GM12878 (cell line): ENCODE measurements at regions of chr7 and their contacts with region 1.

Region 1: DNA sequence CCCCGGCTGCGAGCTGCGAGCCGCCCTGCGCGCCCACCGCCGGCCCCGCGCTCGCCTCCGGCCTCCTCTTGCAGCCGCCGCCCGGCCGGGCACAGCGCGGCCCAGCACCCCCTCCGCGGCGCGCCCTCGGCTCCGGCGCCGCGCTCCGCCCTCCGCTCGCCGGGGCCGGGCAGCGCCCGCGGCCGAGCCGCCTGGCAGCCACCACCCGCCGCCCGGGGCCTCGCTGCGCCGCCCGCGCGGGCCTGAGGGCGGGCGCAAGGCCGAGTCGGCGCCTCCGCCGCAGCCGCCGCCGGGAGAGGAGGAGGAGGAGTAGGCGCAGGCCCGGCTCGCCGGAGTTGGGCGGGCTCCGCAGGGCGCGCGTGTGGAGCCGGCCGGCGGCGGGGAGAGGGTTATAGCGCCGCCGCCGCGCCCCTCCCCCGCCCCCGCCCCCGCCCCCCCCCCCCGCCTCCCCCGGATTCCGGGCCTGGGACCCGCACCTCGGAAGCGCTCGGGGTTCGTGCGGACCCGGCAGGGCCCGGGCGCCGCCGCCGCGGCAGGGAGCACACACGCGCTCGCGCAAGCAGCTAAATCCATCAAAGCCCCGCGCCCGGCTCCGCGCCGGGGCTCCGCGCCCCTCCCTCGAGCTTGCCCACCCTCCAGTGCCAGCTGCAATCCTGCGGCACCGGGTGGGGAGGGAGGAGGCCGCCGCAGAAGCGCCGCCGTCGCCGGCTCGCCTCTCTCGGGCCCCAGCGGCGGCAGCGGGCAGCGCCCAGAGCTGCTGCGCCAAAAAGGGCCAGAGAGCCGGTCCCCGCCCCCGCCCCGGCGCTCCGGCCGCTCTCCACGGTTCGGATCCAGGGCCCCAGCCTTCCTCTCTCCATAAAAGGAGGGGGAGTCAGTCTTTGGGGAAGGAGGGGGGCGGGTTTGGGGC is at the start of gene PDGFA:
- DNase-seq: no peak
- ATAC-seq: peak; percentile 57
- H3K4me3 ChIP-seq: peak within 1 kb of the TSS; percentile 64
- H3K27ac ChIP-seq: no peak within 1 kb of the TSS
- H3K4me1 ChIP-seq: peaks cover 16% of the 10 kb centered on the region
- H3K27me3 ChIP-seq: peaks cover 2 to 3% of the 10 kb centered on the region in 2 experiments
- CTCF ChIP-seq: no peak
- EP300 ChIP-seq: no peak
- POLR2A ChIP-seq: no peak
- RAD21 ChIP-seq: no peak
- polyA plus RNA-seq, gene PDGFA: 5.8 to 9.2 TPM

Region 2: GRCh38 chr7:322111-322671 is 197.5 kb before region 1 on chr7:
- CTCF ChIA-PET with region 1: no interaction called
- POLR2A ChIA-PET with region 1: no interaction called
- RAD21 ChIA-PET with region 1: no interaction called
- SMC1A ChIA-PET with region 1: no interaction called
- in situ Hi-C with region 1: no loop called
- intact Hi-C with region 1: loop called (anchors 10 kb)
- DNase-seq: no peak
- ATAC-seq: peak; percentile 99
- H3K4me3 ChIP-seq: no peak overlapping the region
- H3K27ac ChIP-seq: no peak overlapping the region
- H3K4me1 ChIP-seq: no peaks in the 10 kb centered on the region
- H3K27me3 ChIP-seq: no peaks in the 10 kb centered on the region
- CTCF ChIP-seq: peak; percentile 63 to 85 (median 74); a peak in 5 of 6 replicates
- EP300 ChIP-seq: no peak
- POLR2A ChIP-seq: no peak
- RAD21 ChIP-seq: peak; percentile 91

Region 3: DNA sequence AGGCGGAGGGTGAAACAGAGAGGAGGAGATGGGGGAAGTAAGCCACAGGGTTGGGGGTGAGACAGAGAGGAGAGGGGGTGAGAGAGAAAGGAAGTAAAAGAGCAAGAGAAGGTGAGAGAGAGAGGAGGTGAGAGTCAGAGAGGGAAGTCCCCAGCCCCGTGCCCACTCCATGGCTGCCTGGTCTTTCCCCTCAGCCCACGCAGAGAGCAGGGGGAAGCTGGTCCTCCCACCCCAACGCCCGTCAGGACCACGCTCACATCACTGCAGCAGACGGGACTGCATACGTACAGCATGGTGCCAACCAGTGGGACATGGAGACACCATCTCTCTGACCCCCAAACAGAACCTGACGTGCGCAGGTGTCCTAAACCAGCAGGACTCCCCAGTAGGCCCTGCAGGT is 12.0 kb after region 1 on chr7:
- CTCF ChIA-PET with region 1: no interaction called
- POLR2A ChIA-PET with region 1: interaction called, 4 read pairs
- RAD21 ChIA-PET with region 1: interaction called, 11 read pairs
- SMC1A ChIA-PET with region 1: interaction called, 3 read pairs
- in situ Hi-C with region 1: no loop called
- intact Hi-C with region 1: no loop called
- DNase-seq: no peak
- ATAC-seq: peak; percentile 75
- H3K4me3 ChIP-seq: no peak overlapping the region
- H3K27ac ChIP-seq: no peak overlapping the region
- H3K4me1 ChIP-seq: peaks cover 8% of the 10 kb centered on the region
- H3K27me3 ChIP-seq: no peaks in the 10 kb centered on the region
- CTCF ChIP-seq: no peak
- EP300 ChIP-seq: peak in 1 of 2 experiments; percentile 48; a peak in 1 of 4 replicates
- POLR2A ChIP-seq: no peak
- RAD21 ChIP-seq: no peak

Region 4: GRCh38 chr7:549066-549890 is 29.5 kb after region 1 on chr7:
- CTCF ChIA-PET with region 1: no interaction called
- POLR2A ChIA-PET with region 1: no interaction called
- RAD21 ChIA-PET with region 1: no interaction called
- SMC1A ChIA-PET with region 1: no interaction called
- in situ Hi-C with region 1: no loop called
- intact Hi-C with region 1: no loop called
- DNase-seq: no peak
- ATAC-seq: no peak
- H3K4me3 ChIP-seq: no peak overlapping the region
- H3K27ac ChIP-seq: no peak overlapping the region
- H3K4me1 ChIP-seq: no peaks in the 10 kb centered on the region; the same call in 1 of the 2 replicates
- H3K27me3 ChIP-seq: no peaks in the 10 kb centered on the region
- CTCF ChIP-seq: no peak
- EP300 ChIP-seq: no peak
- POLR2A ChIP-seq: no peak
- RAD21 ChIP-seq: no peak

Region 5: GRCh38 chr7:585229-585711 is 65.5 kb after region 1 on chr7:
- CTCF ChIA-PET with region 1: no interaction called
- POLR2A ChIA-PET with region 1: no interaction called
- RAD21 ChIA-PET with region 1: no interaction called
- SMC1A ChIA-PET with region 1: no interaction called
- in situ Hi-C with region 1: loop called (anchors 5 kb)
- intact Hi-C with region 1: no loop called
- DNase-seq: peak; percentile 43
- ATAC-seq: peak; percentile 65
- H3K4me3 ChIP-seq: no peak overlapping the region
- H3K27ac ChIP-seq: peak overlapping the region; percentile 27
- H3K4me1 ChIP-seq: peaks cover 11% of the 10 kb centered on the region
- H3K27me3 ChIP-seq: no peaks in the 10 kb centered on the region
- CTCF ChIP-seq: no peak
- EP300 ChIP-seq: no peak
- POLR2A ChIP-seq: no peak
- RAD21 ChIP-seq: no peak

Region 6: GRCh38 chr7:604001-604883 is 84.5 kb after region 1 on chr7:
- CTCF ChIA-PET with region 1: no interaction called
- POLR2A ChIA-PET with region 1: interaction called, 4 read pairs
- RAD21 ChIA-PET with region 1: interaction called, 6 read pairs
- SMC1A ChIA-PET with region 1: no interaction called
- in situ Hi-C with region 1: no loop called
- intact Hi-C with region 1: loop called (anchors 2 kb)
- DNase-seq: peak; percentile 71
- ATAC-seq: peak; percentile 81
- H3K4me3 ChIP-seq: peak overlapping the region; percentile 80
- H3K27ac ChIP-seq: peak overlapping the region; percentile 98
- H3K4me1 ChIP-seq: peaks cover 49% of the 10 kb centered on the region
- H3K27me3 ChIP-seq: no peaks in the 10 kb centered on the region
- CTCF ChIP-seq: no peak
- EP300 ChIP-seq: no peak; a peak in 1 of 4 replicates
- POLR2A ChIP-seq: peak; percentile 96
- RAD21 ChIP-seq: no peak